Transverse colon (tissue), 4 donors: ENCODE measurements at regions of chr19 and their contacts with region 1.

Region 1: GRCh38 chr19:11035441-11036377 is 53.6 kb upstream of the LDLR start:
- DNase-seq: peak; percentile 95
- H3K4me3 ChIP-seq: no peak overlapping the region
- H3K27ac ChIP-seq: peak overlapping the region in 3 of 4 donors; percentile 20 to 55 (median 22)
- H3K4me1 ChIP-seq: peaks cover 4 to 11% (median 5%) of the 10 kb centered on the region in 4 donors
- H3K27me3 ChIP-seq: no peaks in the 10 kb centered on the region
- CTCF ChIP-seq: peak; percentile 87 to 93 (median 89)
- EP300 ChIP-seq: no peak
- POLR2A ChIP-seq: no peak

Region 2: GRCh38 chr19:11091426-11092153 is 55.9 kb after region 1 on chr19:
- in situ Hi-C with region 1: no loop called
- intact Hi-C with region 1: loop called (anchors 2 kb)
- DNase-seq: peak; percentile 79
- H3K4me3 ChIP-seq: peak overlapping the region in 3 of 4 donors; percentile 61 to 81 (median 69)
- H3K27ac ChIP-seq: peak overlapping the region; percentile 90 to 98 (median 97)
- H3K4me1 ChIP-seq: peaks cover 14 to 69% (median 55%) of the 10 kb centered on the region in 4 donors
- H3K27me3 ChIP-seq: no peaks in the 10 kb centered on the region
- CTCF ChIP-seq: no peak
- EP300 ChIP-seq: peak; percentile 15
- POLR2A ChIP-seq: peak; percentile 68

Region 3: GRCh38 chr19:11111117-11111774 is 75.5 kb after region 1 on chr19:
- in situ Hi-C with region 1: loop called in 1 of 4 experiments (anchors 10 kb)
- intact Hi-C with region 1: no loop called
- DNase-seq: no peak
- H3K4me3 ChIP-seq: no peak overlapping the region
- H3K27ac ChIP-seq: no peak overlapping the region
- H3K4me1 ChIP-seq: no peaks in the 10 kb centered on the region
- H3K27me3 ChIP-seq: no peaks in the 10 kb centered on the region
- CTCF ChIP-seq: no peak
- EP300 ChIP-seq: no peak
- POLR2A ChIP-seq: no peak

Region 4: DNA sequence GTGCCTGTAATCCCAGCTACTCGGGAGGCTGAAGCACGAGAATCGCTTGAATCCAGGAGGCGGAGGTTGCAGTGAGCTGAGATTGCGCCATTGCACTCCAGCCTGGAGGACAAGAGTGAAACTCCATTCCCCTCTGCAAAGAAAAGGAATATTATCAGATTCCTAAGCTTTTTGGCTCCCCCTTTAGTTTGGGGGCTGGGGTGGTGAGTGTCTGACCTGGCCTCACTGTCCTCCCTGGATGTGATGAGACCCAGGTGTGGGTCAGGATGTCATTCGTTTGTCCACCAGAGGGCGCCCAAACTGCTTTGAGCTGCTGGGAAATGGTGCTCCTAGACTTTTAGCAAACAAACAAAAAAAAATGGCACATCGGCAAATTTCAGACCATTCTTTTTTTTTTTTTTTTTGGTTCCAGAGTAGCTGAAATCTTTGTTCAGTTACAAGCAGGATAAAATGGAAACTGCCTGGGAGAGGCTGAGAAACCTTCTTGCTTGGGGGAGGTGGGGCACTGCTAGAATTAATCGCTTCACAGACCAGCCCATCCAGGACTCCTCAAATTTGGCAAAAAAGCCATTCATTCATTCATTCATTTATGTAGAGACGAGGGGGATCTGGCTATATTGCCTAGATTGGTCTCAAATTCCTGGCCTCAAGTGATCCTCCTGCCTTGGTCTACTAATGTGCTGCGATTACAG is 90.4 kb after region 1 on chr19:
- in situ Hi-C with region 1: loop called in 3 of 4 experiments (anchors 5 to 10 kb)
- intact Hi-C with region 1: loop called (anchors 5 kb)
- DNase-seq: peak; percentile 86
- H3K4me3 ChIP-seq: no peak overlapping the region
- H3K27ac ChIP-seq: no peak overlapping the region
- H3K4me1 ChIP-seq: peaks cover 0 to 7% (median 5%) of the 10 kb centered on the region in 4 donors
- H3K27me3 ChIP-seq: no peaks in the 10 kb centered on the region
- CTCF ChIP-seq: peak; percentile 77 to 85 (median 78)
- EP300 ChIP-seq: no peak
- POLR2A ChIP-seq: no peak

Region 5: DNA sequence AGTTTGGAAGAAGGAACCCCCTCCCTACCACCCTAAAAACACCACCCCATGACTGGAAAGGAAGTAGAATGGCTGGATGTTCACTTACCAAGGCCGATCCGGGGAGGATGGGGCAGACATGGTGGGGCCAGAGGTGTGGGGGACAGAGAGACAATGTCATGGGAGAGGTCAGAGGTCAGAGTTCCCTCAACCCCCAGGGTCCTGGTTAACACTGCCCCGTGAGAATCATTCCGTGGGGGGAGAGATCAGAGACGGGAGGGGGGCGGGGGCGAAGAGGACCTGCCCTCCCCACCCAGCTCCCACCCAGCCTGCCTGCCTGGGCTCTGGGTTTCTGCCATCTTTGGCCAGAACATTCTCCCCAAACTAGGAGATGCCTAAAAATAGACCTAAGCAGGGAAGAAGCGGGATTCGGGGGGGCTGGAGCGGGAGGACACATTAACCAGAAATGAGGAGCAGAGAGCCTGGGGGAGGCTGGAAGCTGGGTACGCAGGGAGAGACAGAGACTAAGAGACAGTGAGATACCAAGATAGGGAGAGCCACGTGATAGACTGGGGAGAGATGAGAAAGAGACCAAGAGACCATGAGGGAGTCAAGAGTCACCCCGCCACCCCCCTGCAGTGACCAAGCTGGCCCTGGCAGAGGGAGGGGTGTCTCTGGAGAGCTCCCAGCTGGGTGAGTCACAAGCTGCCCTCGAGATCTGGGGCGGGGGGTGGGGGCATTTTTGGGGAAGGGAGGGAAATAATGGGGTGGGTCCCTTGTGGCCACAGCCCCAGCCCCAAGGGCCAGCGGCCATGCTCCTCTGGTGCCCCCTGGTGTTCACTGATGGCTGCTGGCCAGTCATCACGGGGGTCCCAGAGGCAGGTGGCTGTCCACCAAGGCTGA is 167.7 kb after region 1 on chr19:
- in situ Hi-C with region 1: loop called in 3 of 4 experiments (anchors 10 to 25 kb)
- intact Hi-C with region 1: loop called (anchors 5 kb)
- DNase-seq: peak; percentile 67
- H3K4me3 ChIP-seq: no peak overlapping the region
- H3K27ac ChIP-seq: peak overlapping the region; percentile 77 to 91 (median 84)
- H3K4me1 ChIP-seq: peaks cover 0 to 29% (median 12%) of the 10 kb centered on the region in 4 donors
- H3K27me3 ChIP-seq: no peaks in the 10 kb centered on the region
- CTCF ChIP-seq: peak; percentile 78 to 87 (median 81)
- EP300 ChIP-seq: peak; percentile 66
- POLR2A ChIP-seq: no peak

Region 6: GRCh38 chr19:11722414-11722813 is 686.7 kb after region 1 on chr19:
- in situ Hi-C with region 1: no loop called
- intact Hi-C with region 1: no loop called
- DNase-seq: no peak
- H3K4me3 ChIP-seq: no peak overlapping the region
- H3K27ac ChIP-seq: no peak overlapping the region
- H3K4me1 ChIP-seq: no peaks in the 10 kb centered on the region
- H3K27me3 ChIP-seq: no peaks in the 10 kb centered on the region
- CTCF ChIP-seq: no peak
- EP300 ChIP-seq: no peak
- POLR2A ChIP-seq: no peak